Activated CD8-positive, alpha-beta T cell treated with anti-CD3 and anti-CD28 coated beads, Interleukin-2, amount 10 ng/mL, durations not matched to agents 7 days and 5 days (primary cell): ENCODE measurements at regions of chr20 and their contacts with region 1.

Region 1: DNA sequence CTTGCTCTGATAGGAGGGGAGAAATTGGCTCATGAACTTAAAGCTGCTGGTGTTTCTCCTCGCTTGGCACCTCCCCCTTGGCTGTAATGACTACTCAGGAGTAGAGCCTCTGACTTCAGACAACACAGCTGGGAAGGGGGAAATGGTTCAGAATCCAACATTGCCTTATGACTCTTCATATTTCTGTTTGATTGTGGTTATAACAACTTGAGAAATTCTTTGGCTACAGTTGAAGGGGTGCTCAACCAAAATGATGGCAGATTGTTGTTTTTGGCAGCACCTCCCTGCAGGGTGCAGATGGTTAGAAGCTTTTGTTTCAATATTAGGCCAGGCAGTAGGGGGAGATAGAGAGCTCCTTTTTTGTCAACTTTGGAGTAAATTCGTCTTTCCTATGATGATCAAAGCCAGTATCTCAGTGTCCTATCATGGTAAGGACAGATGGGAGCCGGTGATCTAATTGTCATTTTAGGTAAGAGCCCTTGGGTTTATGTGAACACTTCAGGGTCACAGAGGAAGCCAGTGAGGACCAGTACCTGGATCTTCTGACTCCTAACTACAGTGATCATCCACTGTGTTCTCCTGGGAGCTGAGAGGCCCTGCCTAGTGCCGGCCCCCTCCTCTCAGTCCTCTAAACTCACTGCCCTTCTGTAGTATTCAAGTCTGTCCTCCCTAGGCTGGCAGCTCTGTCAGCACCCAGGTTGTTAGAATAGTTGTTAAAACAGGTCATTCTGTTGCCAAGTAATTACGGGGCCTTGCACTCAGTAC is 39.9 kb downstream of the RPRD1B start:
- DNase-seq: peak; percentile 43
- ATAC-seq: peak; percentile 70
- H3K4me3 Mint-ChIP-seq: no peak overlapping the region
- H3K27ac Mint-ChIP-seq: no peak overlapping the region
- H3K4me1 Mint-ChIP-seq: peaks cover 3% of the 10 kb centered on the region
- H3K27me3 Mint-ChIP-seq: no peaks in the 10 kb centered on the region

Region 2: DNA sequence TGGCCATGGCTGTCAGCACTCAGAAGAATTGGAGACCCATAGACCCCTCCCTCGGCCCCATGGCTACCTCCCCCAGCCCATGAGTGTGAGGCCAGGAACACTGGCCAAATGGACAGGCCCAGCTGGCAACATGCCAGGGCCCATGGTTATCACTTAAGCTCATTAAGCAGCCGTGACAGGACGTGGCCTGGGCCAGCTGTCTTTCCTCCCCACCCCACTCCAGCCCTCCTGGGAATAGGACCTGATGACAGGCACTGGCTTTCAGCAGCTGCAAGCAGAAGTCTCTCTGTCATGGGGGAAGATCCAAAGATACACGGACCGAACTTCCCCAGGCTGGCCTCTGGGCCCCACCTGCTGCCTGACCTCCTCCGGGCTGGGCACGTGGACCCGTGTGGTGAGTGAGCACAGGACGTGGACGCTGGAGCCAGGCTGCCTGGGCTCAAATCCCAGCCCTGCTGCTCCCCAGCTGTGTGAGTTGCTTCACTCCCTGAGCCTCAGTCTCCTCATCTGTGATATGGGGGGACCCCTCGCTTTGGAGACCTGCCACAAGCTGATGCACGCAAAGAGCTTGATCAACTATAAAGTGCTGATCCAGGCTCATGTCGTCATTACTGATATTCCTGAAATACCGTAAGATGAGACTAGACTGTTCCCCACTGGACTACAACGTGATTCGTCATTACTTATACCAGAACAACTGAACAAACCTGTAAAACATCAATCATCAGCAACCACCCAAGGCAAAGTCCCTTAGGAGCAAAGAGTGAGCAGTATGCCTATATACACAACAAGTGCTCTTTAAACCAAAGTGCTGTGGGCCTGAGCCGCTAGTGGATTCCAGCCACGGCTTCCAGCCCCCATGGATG is 192.5 kb before region 1 on chr20:
- CTCF ChIA-PET with region 1: no interaction called
- POLR2A ChIA-PET with region 1: no interaction called
- DNase-seq: no peak
- ATAC-seq: no peak
- H3K4me3 Mint-ChIP-seq: no peak overlapping the region
- H3K27ac Mint-ChIP-seq: no peak overlapping the region
- H3K4me1 Mint-ChIP-seq: no peaks in the 10 kb centered on the region
- H3K27me3 Mint-ChIP-seq: no peaks in the 10 kb centered on the region

Region 3: GRCh38 chr20:38057351-38057972 is 16.0 kb before region 1 on chr20:
- CTCF ChIA-PET with region 1: interaction called, 19 read pairs
- POLR2A ChIA-PET with region 1: no interaction called
- DNase-seq: peak; percentile 83
- ATAC-seq: peak; percentile 92
- H3K4me3 Mint-ChIP-seq: no peak overlapping the region
- H3K27ac Mint-ChIP-seq: peak overlapping the region; percentile 76
- H3K4me1 Mint-ChIP-seq: peaks cover 14% of the 10 kb centered on the region
- H3K27me3 Mint-ChIP-seq: no peaks in the 10 kb centered on the region

Region 4: DNA sequence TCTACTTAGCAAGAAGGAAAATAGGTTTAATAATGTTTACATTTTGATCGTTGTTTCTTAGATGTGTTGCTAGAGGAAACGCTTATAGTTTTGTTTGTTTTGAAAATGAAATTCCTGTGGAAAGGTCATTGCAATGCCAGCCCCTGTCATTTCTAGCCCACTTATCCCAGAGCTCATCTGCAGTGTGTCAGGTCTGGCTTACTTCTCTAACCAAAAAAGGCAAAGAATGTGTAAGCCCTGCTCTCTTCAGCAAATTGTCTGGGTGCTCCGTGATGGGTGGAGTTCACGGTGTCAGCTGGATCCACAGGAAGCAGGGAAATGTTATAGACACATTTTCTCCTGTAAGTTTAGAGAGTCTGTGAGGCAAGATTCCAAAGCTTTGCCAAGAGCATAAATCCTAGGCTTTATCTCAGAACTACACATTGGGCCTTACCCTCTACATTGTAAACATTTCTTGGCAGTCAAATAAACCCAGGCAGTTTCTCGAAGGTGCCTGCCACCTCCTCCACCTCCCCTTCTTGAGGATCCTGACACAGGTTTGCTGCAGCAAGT is 11.0 kb after region 1 on chr20:
- CTCF ChIA-PET with region 1: interaction called, 19 read pairs
- POLR2A ChIA-PET with region 1: no interaction called
- DNase-seq: no peak
- ATAC-seq: no peak
- H3K4me3 Mint-ChIP-seq: no peak overlapping the region
- H3K27ac Mint-ChIP-seq: no peak overlapping the region
- H3K4me1 Mint-ChIP-seq: no peaks in the 10 kb centered on the region
- H3K27me3 Mint-ChIP-seq: no peaks in the 10 kb centered on the region

Region 5: GRCh38 chr20:38091441-38092216 is 18.1 kb after region 1 on chr20:
- CTCF ChIA-PET with region 1: interaction called, 11 read pairs
- POLR2A ChIA-PET with region 1: no interaction called
- DNase-seq: no peak
- ATAC-seq: peak; percentile 20
- H3K4me3 Mint-ChIP-seq: no peak overlapping the region
- H3K27ac Mint-ChIP-seq: peak overlapping the region; percentile 74
- H3K4me1 Mint-ChIP-seq: peaks cover 40% of the 10 kb centered on the region
- H3K27me3 Mint-ChIP-seq: no peaks in the 10 kb centered on the region

Region 6: GRCh38 chr20:38165089-38165989 is 91.8 kb after region 1 on chr20 and contains the start of gene TGM2:
- CTCF ChIA-PET with region 1: interaction called, 15 read pairs
- POLR2A ChIA-PET with region 1: no interaction called
- DNase-seq: peak; percentile 50
- ATAC-seq: peak; percentile 83
- H3K4me3 Mint-ChIP-seq: no peak within 1 kb of the TSS
- H3K27ac Mint-ChIP-seq: no peak within 1 kb of the TSS
- H3K4me1 Mint-ChIP-seq: peaks cover 38% of the 10 kb centered on the region
- H3K27me3 Mint-ChIP-seq: peaks cover 13% of the 10 kb centered on the region
- total RNA-seq, gene TGM2: 0.31 to 0.34 TPM